Posterior cingulate gyrus (tissue), 11 donors: ENCODE measurements at regions of chr15 and their contacts with region 1.

Region 1: GRCh38 chr15:62306851-62307504 is 141.9 kb upstream of the C2CD4B start:
- DNase-seq: peak in 6 of 10 donors; percentile 27 to 85 (median 36)

Region 2: GRCh38 chr15:61871926-61872522 is 435.0 kb before region 1 on chr15:
- intact Hi-C with region 1: loop called (anchors 5 kb)
- DNase-seq: no peak

Region 3: GRCh38 chr15:61994216-61994615 is 312.8 kb before region 1 on chr15:
- intact Hi-C with region 1: no loop called
- DNase-seq: no peak

Region 4: GRCh38 chr15:62060113-62060895 is 246.7 kb before region 1 on chr15 and contains the start of gene VPS13C:
- intact Hi-C with region 1: loop called (anchors 10 kb)
- DNase-seq: peak; percentile 86 to 99 (median 90)

Region 5: GRCh38 chr15:62241135-62241770 is 65.7 kb before region 1 on chr15:
- intact Hi-C with region 1: no loop called
- DNase-seq: no peak

Region 6: DNA sequence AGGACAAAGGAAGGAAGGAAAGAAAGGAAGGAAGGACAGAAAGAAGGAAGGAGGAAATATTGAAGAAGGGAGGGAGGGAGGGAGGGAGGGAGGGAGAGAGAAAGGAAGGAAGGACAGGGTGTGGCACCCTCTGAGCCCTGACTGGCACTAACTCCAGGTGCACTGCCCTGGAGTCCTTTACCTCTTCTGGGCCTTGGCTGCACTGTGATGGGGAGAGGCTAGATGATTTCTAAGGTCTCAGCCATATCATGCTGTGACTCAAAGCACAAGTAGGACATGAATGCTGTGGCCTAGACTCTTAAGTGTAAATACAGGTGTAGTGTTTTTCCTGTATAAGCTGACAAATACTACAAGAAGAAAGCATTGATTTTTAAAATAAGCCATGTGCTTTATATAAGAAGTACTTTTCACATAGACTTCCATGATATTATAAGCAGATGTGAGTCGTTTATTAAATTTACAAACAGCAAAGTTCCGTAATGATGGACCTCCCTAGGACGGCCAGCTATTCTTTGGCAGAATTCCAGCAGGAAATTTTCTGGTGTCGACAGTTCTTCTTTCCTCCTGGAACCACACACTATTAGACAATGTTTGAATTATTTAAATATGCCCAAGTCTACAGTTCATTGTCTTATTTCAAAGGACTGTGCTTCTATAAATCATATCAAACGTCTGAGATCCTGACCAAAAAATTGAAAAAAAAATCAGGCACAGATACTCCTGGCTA is 72.0 kb after region 1 on chr15:
- intact Hi-C with region 1: no loop called
- DNase-seq: no peak